ENCODE measurements at regions of chr9 and their contacts with region 1.

Region 1: GRCh38 chr9:87324613-87325194 is 173.0 kb upstream of the DAPK1 start:
- DNase-seq: no peak

Region 2: GRCh38 chr9:86434039-86434726 is 890.5 kb before region 1 on chr9:
- intact Hi-C with region 1: loop called (anchors 5 kb)
- DNase-seq: no peak

Region 3: DNA sequence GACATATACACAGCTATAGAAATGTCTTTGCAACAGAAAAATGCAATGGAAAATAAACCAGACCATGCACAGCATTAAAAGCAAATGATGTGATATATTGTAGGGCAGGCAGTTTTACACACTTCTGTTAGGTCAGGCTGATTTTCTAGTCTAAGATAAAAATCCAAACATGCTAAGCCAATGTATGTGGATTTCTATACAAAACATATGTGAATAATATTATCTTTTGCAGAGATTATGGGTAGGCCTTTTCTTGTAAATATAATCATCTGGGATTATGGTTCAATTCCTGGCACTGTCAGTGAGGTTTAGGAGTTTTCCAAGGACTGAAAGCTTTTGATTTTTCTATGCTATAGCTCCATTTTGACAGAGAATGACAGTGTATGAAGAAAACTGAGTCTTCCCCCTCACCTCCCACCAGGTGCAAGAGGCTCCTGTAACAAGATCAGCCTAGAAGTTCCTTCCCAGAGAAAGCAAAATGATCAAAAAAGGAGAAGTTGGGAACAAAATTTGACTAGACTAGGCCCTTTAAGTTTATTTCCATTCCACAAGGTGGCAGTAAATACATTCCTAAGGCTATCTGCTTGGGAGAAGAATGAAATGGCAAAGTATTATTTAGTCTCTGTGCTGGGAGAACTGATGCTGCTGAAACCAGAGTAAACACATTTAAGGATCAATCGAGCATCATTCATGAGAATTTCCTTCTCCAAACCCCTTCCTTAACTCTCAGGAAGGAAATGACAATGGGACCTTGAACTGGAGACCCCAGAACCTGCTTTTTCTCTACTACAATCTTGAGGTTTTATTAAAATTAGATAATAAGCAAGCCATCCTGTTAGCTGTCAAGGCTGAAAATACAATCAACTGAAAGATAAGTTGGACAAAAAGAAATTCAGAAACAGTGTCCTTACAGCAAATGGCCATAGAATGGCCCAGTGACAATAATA is 837.5 kb before region 1 on chr9:
- intact Hi-C with region 1: loop called (anchors 2 kb)
- DNase-seq: no peak

Region 4: DNA sequence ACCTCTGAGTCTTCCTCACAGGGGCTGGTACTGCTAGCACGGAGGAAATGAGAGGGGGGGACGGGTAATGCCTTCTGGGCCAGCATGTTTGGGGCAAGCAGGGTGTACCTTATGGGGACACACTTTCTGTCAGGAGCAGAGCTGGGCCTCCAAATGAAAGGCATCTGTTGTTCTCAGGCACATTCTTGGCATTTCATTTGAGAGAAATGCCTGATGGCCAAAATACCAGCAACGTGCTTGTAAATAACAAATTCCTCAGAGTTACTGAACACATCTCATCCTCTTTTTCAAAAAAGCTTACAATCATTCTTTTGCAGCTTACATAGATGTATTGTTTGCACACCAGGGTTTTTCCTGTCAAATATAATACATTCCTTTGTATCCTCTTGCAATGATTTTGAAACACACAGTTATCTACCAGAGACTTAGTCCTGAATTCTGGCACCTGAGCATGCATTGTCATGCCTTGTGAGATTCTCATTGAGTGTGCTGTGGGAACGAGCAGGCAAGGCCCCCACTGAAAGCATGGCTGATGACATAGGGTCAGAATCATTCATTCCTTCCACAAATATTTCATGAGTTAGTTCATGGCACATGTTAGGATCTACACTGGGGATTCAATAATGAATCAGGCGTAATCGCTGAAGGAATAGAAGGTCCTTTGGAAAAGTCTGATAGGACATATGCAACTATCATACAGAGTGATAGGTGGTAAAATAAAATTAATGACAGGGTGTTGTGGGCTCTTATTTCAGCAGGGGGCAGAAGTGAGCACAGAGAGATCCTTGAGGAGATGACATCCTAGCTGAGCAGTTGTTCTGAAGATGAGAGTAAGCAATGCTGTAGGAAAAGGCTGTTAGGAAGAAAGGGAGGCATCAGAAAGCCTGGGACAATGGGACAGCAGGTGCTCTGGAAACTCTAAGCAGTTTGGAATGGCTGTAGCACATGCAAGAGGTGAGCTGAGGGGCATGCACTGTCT is 709.5 kb before region 1 on chr9:
- intact Hi-C with region 1: loop called (anchors 10 kb)
- DNase-seq: no peak